ENCODE measurements at regions of chr12 and their contacts with region 1.

Region 1: GRCh38 chr12:55738123-55739024 is 4.5 kb upstream of the GDF11 start:
- DNase-seq: peak; percentile 78
- H3K4me3 ChIP-seq: peak overlapping the region; percentile 66 to 98
- H3K27ac ChIP-seq: peak overlapping the region; percentile 80 to 83
- H3K4me1 ChIP-seq: peaks cover 9 to 24% of the 10 kb centered on the region in 2 experiments; a peak in 3 of 4 replicates
- H3K27me3 ChIP-seq: no peaks in the 10 kb centered on the region
- CTCF ChIP-seq: peak; percentile 85
- EP300 ChIP-seq: no peak
- RAD21 ChIP-seq: peak; percentile 96

Region 2: GRCh38 chr12:55451693-55452092 is 286.7 kb before region 1 on chr12:
- CTCF ChIA-PET with region 1: no interaction called
- POLR2A ChIA-PET with region 1: no interaction called
- DNase-seq: no peak
- H3K4me3 ChIP-seq: no peak overlapping the region
- H3K27ac ChIP-seq: no peak overlapping the region
- H3K4me1 ChIP-seq: no peaks in the 10 kb centered on the region
- H3K27me3 ChIP-seq: no peaks in the 10 kb centered on the region
- CTCF ChIP-seq: no peak
- EP300 ChIP-seq: no peak
- RAD21 ChIP-seq: no peak

Region 3: GRCh38 chr12:55619354-55620138 is 118.8 kb before region 1 on chr12:
- CTCF ChIA-PET with region 1: no interaction called
- POLR2A ChIA-PET with region 1: no interaction called
- DNase-seq: peak; percentile 62
- H3K4me3 ChIP-seq: no peak overlapping the region
- H3K27ac ChIP-seq: no peak overlapping the region
- H3K4me1 ChIP-seq: no peaks in the 10 kb centered on the region
- H3K27me3 ChIP-seq: peaks cover 24% of the 10 kb centered on the region; the same call in 1 of the 2 replicates
- CTCF ChIP-seq: peak; percentile 91
- EP300 ChIP-seq: no peak
- RAD21 ChIP-seq: peak; percentile 85

Region 4: DNA sequence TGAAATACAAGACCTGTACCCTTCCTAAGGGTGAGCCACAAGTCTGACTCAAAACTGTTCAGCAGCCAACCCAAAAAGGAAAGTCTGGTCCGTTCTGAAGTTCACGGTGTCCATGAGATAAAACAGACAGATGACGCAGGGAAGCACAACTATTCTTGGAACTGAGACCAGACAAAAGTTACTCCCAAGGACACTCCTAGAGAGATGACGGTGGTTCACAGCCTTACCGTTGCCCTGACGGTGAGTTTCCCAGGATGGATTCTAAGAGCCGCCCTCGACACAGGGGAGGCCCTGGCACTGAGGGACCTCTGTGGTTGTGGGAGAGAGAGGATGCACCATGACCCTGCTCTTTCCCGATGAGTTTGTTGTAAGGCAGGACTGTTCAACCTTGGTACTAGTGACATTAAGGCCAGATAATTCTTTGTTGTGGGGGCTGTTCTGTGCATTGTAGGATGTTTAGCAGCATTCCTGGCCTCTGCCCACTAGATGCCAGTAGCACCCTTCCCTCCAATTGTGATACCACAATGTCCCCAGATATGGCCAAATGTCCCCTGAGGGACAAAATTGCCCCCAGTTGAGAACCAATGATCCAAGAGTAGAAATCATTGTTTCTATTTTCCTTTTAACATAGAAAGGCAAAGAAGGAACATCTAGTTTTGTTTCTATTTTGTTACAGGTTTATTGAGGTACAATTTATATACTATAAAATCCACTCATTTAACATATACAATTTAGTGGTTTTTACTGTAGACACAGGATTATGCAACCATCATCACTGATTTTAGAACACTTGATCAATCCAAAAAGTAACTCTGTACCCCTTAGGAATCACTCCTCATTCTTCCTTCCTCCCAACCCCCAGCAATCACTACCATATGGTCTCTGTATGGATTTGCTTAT is 78.6 kb before region 1 on chr12:
- CTCF ChIA-PET with region 1: interaction called, 71 read pairs
- POLR2A ChIA-PET with region 1: interaction called, 3 read pairs
- DNase-seq: peak; percentile 36
- H3K4me3 ChIP-seq: no peak overlapping the region
- H3K27ac ChIP-seq: no peak overlapping the region
- H3K4me1 ChIP-seq: no peaks in the 10 kb centered on the region
- H3K27me3 ChIP-seq: peaks cover 15% of the 10 kb centered on the region; the same call in 1 of the 2 replicates
- CTCF ChIP-seq: peak; percentile 66
- EP300 ChIP-seq: no peak
- RAD21 ChIP-seq: peak; percentile 82

Region 5: DNA sequence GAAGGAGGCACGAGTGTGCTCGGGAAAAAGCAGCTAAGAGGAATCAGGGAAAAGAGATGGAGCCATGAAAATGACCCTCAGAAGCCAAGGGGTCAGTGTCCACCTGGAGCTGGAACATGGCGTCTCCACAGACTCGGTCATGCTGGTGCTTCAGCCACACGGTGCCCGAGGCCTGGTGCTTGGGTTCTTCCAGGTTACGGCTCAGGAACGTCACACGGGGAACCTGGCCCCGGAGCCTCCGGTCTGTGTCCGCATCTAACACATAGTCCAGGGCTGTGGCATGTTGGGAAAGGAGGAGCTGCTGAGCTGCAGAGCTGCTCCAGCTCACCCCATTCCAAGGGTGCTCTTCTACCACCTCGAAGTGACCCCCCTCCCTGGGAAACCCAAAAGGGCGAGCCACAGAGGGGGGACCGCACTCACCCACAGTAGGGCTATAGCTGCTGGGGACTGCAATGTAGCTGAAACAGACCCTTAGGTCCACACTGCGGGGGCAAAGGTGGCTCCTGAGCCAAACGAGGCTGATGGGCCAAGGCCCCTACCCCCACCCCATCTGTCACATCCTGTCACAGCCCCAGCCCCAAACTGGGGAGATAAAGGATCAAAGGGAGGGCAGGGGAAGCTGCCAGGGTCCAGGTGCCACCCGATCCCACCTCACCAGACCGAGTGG is 41.4 kb before region 1 on chr12:
- CTCF ChIA-PET with region 1: no interaction called
- POLR2A ChIA-PET with region 1: no interaction called
- DNase-seq: no peak
- H3K4me3 ChIP-seq: no peak overlapping the region
- H3K27ac ChIP-seq: no peak overlapping the region
- H3K4me1 ChIP-seq: peaks cover 0 to 3% of the 10 kb centered on the region in 2 experiments; a peak in 1 of 4 replicates
- H3K27me3 ChIP-seq: no peaks in the 10 kb centered on the region
- CTCF ChIP-seq: no peak
- EP300 ChIP-seq: no peak
- RAD21 ChIP-seq: no peak

Region 6: DNA sequence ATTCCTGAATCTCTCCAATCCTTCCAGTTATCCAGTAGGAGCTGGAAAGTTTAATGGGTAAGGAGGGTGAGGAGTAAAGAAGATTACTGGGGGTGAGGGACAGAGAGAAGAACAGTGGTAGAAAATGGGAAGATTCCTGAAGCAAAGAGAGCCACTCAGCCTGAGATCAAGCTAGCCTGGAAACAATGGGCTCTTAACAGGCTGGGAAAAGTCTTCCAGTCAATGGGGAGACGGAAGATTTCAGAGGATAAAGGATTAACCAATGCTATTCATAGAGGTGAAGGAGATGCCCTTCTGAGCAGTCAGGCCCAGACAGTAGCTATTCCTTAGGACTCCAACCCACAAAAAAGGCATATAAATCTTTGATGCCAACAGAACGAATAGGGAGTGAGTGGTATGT is 19.3 kb after region 1 on chr12:
- CTCF ChIA-PET with region 1: interaction called, 14 read pairs
- POLR2A ChIA-PET with region 1: interaction called, 6 read pairs
- DNase-seq: no peak
- H3K4me3 ChIP-seq: no peak overlapping the region
- H3K27ac ChIP-seq: no peak overlapping the region
- H3K4me1 ChIP-seq: no peaks in the 10 kb centered on the region
- H3K27me3 ChIP-seq: no peaks in the 10 kb centered on the region
- CTCF ChIP-seq: no peak
- EP300 ChIP-seq: no peak
- RAD21 ChIP-seq: no peak

Region 7: DNA sequence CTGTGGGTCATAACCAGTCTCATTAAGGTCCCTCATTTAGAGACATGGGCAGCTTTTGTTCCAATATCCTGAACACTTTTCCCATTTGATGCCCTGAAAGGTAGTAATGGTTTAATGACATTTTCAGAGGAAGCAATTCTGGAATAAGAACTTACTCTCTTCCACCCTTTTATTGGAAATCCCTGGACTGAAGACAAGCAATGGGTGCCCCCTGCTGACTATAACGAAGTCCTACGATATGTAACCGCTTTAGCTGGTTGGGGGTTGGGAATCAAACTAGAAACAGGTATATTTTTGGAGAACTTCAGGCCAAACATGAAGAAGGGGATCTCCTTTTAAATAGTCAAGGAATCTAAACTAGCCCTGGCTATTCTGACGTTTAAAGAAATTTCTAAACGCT is 58.7 kb after region 1 on chr12:
- CTCF ChIA-PET with region 1: interaction called, 358 read pairs
- POLR2A ChIA-PET with region 1: no interaction called
- DNase-seq: peak; percentile 68
- H3K4me3 ChIP-seq: no peak overlapping the region; a peak in 1 of 4 replicates
- H3K27ac ChIP-seq: no peak overlapping the region
- H3K4me1 ChIP-seq: no peaks in the 10 kb centered on the region
- H3K27me3 ChIP-seq: no peaks in the 10 kb centered on the region
- CTCF ChIP-seq: peak; percentile 68
- EP300 ChIP-seq: no peak
- RAD21 ChIP-seq: peak; percentile 80

Region 8: DNA sequence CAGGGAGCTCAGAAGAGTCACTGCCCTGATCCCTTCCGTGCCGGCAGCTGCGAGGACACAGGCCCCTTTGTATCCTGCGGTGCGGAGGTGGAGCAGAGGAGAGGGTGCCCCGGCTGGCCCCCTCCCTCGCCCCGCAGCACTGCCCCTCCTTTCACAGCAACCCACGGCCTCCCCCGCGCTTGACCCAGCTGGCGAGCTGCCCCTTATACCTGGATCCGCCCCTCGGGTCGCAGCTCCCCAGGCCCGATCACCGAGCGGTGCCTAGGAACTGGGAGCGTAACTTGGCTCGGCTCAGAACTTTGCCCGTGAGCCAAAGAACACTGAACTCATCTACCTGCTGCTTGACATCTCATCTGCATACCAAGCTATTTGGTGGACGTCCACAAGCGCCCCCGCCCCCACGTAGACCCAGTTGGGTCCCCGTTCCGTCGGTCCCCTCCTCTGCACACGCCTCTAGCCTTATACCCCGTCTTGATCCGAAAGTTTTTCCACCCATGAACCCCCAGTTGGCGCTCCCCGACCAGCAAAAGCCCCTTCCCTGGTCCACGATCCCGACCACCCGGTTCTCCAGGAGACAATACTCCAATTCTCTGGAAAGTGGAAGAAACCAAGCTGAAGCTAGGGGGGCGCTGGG is 91.7 kb after region 1 on chr12:
- CTCF ChIA-PET with region 1: interaction called, 16 read pairs
- POLR2A ChIA-PET with region 1: interaction called, 7 read pairs
- DNase-seq: peak; percentile 79
- H3K4me3 ChIP-seq: peak overlapping the region; percentile 89 to 92
- H3K27ac ChIP-seq: peak overlapping the region; percentile 84
- H3K4me1 ChIP-seq: peaks cover 4 to 45% of the 10 kb centered on the region in 2 experiments; a peak in 3 of 4 replicates
- H3K27me3 ChIP-seq: no peaks in the 10 kb centered on the region
- CTCF ChIP-seq: no peak
- EP300 ChIP-seq: no peak; a peak in 1 of 4 replicates
- RAD21 ChIP-seq: peak; percentile 39; the same call in 1 of the 2 replicates

Region 9: DNA sequence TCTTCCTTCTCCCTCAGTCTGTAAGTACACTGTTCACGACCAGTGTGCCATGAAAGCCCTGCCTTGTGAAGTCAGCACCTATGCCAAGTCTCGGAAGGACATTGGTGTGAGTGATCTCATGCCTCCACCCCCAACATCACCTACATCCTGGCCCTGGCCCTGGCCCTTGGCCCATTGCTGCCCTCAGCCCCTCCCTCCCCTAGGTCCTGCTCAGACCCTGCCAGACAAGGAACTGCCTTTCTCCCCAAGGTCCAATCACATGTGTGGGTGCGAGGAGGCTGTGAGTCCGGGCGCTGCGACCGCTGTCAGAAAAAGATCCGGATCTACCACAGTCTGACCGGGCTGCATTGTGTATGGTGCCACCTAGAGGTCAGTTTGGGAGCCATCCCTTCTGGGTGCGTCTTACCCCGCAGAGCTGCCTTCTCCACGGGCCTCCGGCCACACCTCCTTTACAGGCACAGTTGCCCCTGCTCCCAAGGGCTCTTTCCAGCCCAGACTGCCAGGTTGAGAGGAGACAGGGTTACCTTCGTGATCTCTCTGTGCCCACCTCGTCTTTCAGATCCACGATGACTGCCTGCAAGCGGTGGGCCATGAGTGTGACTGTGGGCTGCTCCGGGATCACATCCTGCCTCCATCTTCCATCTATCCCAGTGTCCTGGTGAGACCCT is 201.8 kb after region 1 on chr12:
- CTCF ChIA-PET with region 1: interaction called, 96 read pairs
- POLR2A ChIA-PET with region 1: no interaction called
- DNase-seq: peak; percentile 90
- H3K4me3 ChIP-seq: no peak overlapping the region; a peak in 1 of 4 replicates
- H3K27ac ChIP-seq: peak overlapping the region in 1 of 2 experiments; percentile 2; a peak in 1 of 4 replicates
- H3K4me1 ChIP-seq: peaks cover 0 to 9% of the 10 kb centered on the region in 2 experiments; a peak in 1 of 4 replicates
- H3K27me3 ChIP-seq: no peaks in the 10 kb centered on the region
- CTCF ChIP-seq: peak; percentile 90
- EP300 ChIP-seq: no peak
- RAD21 ChIP-seq: peak; percentile 86

Region 10: DNA sequence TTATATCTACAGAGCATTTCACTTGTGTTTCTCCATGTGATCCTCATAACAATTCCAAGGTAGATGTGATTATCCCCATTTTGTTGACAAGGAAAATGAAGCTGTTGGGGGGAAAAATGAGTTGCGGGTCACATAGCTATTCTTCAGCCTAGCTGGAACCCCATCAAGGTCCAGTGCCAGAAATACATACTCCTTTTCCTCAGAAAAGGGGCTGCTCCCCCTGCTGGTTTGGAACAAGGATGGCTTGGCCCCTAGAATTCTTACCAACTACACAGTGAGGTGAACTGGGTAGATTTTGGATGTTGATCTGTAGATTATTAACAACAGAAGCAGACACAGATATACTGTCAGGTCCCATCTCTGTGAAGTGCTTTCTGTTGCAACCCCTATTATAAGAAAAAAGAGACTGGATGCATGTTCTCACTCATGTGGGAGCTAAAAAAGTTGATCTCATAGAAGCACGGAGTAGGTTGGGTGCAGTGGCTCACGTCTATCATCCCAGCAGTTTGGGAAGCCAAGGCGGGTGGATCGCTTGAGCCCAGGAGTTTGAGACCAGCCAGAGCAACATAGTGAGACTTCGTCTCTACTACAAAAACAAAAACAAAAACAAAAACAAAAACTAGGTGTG is 291.4 kb after region 1 on chr12:
- CTCF ChIA-PET with region 1: interaction called, 13 read pairs
- POLR2A ChIA-PET with region 1: no interaction called
- DNase-seq: peak; percentile 76
- H3K4me3 ChIP-seq: no peak overlapping the region
- H3K27ac ChIP-seq: peak overlapping the region in 1 of 2 experiments; percentile 54; a peak in 1 of 4 replicates
- H3K4me1 ChIP-seq: 0 out of 4 replicates have a peak, but pooled peaks cover 0 to 8% of the 10 kb centered on the region in 2 experiments
- H3K27me3 ChIP-seq: no peaks in the 10 kb centered on the region
- CTCF ChIP-seq: peak; percentile 86
- EP300 ChIP-seq: no peak
- RAD21 ChIP-seq: peak; percentile 75